ENCODE measurements at regions of chr12 and their contacts with region 1.

Region 1: DNA sequence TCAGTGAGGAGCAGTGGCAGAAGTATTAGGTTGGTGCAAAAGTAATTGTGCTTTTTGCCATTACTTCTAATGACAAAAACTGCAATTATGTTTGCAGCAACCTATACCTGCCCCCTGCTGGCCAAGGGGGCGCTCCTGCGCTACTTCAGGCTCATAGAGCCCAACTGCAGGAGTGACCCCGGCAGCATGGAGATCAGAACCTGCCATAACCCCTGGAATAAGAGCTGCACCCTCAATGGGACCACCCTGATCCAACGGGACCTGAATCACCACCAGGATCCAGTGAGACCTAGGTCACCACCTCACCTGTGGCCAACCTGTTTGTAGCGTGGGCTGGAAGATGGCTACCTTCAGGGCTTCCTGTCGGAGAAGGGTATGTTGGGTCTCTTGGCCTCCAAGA is 8.2 kb upstream of the C12orf42 start:
- DNase-seq: no peak
- ATAC-seq: peak; percentile 26
- H3K4me3 ChIP-seq: no peak overlapping the region
- H3K27ac ChIP-seq: no peak overlapping the region
- H3K4me1 ChIP-seq: peaks cover 22% of the 10 kb centered on the region
- H3K27me3 ChIP-seq: no peaks in the 10 kb centered on the region
- CTCF ChIP-seq: peak; percentile 59 to 80 (median 78)
- EP300 ChIP-seq: no peak
- POLR2A ChIP-seq: no peak
- RAD21 ChIP-seq: peak; percentile 85

Region 2: GRCh38 chr12:102948941-102949352 is 555.0 kb before region 1 on chr12:
- CTCF ChIA-PET with region 1: interaction called, 82 read pairs
- POLR2A ChIA-PET with region 1: interaction called, 3 read pairs
- RAD21 ChIA-PET with region 1: interaction called, 40 read pairs
- SMC1A ChIA-PET with region 1: interaction called, 69 read pairs
- in situ Hi-C with region 1: loop called (anchors 5 kb)
- intact Hi-C with region 1: loop called (anchors 2 kb)
- DNase-seq: no peak
- ATAC-seq: peak; percentile 32
- H3K4me3 ChIP-seq: no peak overlapping the region
- H3K27ac ChIP-seq: no peak overlapping the region
- H3K4me1 ChIP-seq: peaks cover 8% of the 10 kb centered on the region
- H3K27me3 ChIP-seq: no peaks in the 10 kb centered on the region; a peak in 1 of 4 replicates
- CTCF ChIP-seq: peak; percentile 88 to 94 (median 90)
- EP300 ChIP-seq: no peak
- POLR2A ChIP-seq: no peak
- RAD21 ChIP-seq: peak; percentile 88

Region 3: GRCh38 chr12:103114296-103115055 is 389.5 kb before region 1 on chr12:
- CTCF ChIA-PET with region 1: interaction called, 3 read pairs
- POLR2A ChIA-PET with region 1: no interaction called
- RAD21 ChIA-PET with region 1: no interaction called
- SMC1A ChIA-PET with region 1: interaction called, 5 read pairs
- in situ Hi-C with region 1: no loop called
- intact Hi-C with region 1: loop called (anchors 1 kb)
- DNase-seq: peak; percentile 95
- ATAC-seq: peak; percentile 98
- H3K4me3 ChIP-seq: no peak overlapping the region
- H3K27ac ChIP-seq: peak overlapping the region; percentile 80
- H3K4me1 ChIP-seq: peaks cover 19% of the 10 kb centered on the region
- H3K27me3 ChIP-seq: no peaks in the 10 kb centered on the region
- CTCF ChIP-seq: no peak
- EP300 ChIP-seq: peak; percentile 73 to 94; a peak in 3 of 4 replicates
- POLR2A ChIP-seq: no peak
- RAD21 ChIP-seq: peak; percentile 47

Region 4: GRCh38 chr12:103279444-103279843 is 224.5 kb before region 1 on chr12:
- CTCF ChIA-PET with region 1: no interaction called
- POLR2A ChIA-PET with region 1: interaction called, 3 read pairs
- RAD21 ChIA-PET with region 1: interaction called, 7 read pairs
- SMC1A ChIA-PET with region 1: interaction called, 4 read pairs
- in situ Hi-C with region 1: no loop called
- intact Hi-C with region 1: loop called (anchors 1 kb)
- DNase-seq: peak; percentile 93
- ATAC-seq: peak; percentile 94
- H3K4me3 ChIP-seq: no peak overlapping the region
- H3K27ac ChIP-seq: peak overlapping the region; percentile 53; the same call in 1 of the 2 replicates
- H3K4me1 ChIP-seq: peaks cover 21% of the 10 kb centered on the region
- H3K27me3 ChIP-seq: no peaks in the 10 kb centered on the region
- CTCF ChIP-seq: no peak
- EP300 ChIP-seq: peak; percentile 83 to 93
- POLR2A ChIP-seq: no peak
- RAD21 ChIP-seq: 0 out of 2 replicates have a peak, but pooled peaks have one; percentile 8

Region 5: GRCh38 chr12:103369929-103370328 is 134.0 kb before region 1 on chr12:
- CTCF ChIA-PET with region 1: no interaction called
- POLR2A ChIA-PET with region 1: no interaction called
- RAD21 ChIA-PET with region 1: no interaction called
- SMC1A ChIA-PET with region 1: interaction called, 5 read pairs
- in situ Hi-C with region 1: no loop called
- intact Hi-C with region 1: loop called (anchors 1 kb)
- DNase-seq: peak; percentile 78
- ATAC-seq: peak; percentile 89
- H3K4me3 ChIP-seq: no peak overlapping the region
- H3K27ac ChIP-seq: no peak overlapping the region
- H3K4me1 ChIP-seq: peaks cover 10% of the 10 kb centered on the region
- H3K27me3 ChIP-seq: no peaks in the 10 kb centered on the region
- CTCF ChIP-seq: no peak
- EP300 ChIP-seq: peak; percentile 76 to 86
- POLR2A ChIP-seq: no peak
- RAD21 ChIP-seq: no peak

Region 6: GRCh38 chr12:103441437-103442181 is 62.4 kb before region 1 on chr12:
- CTCF ChIA-PET with region 1: interaction called, 6 read pairs
- POLR2A ChIA-PET with region 1: no interaction called
- RAD21 ChIA-PET with region 1: interaction called, 3 read pairs
- SMC1A ChIA-PET with region 1: interaction called, 4 read pairs
- in situ Hi-C with region 1: no loop called
- intact Hi-C with region 1: loop called (anchors 1 kb)
- DNase-seq: peak; percentile 97
- ATAC-seq: peak; percentile 98
- H3K4me3 ChIP-seq: peak overlapping the region; percentile 58
- H3K27ac ChIP-seq: peak overlapping the region; percentile 71
- H3K4me1 ChIP-seq: peaks cover 22% of the 10 kb centered on the region
- H3K27me3 ChIP-seq: no peaks in the 10 kb centered on the region
- CTCF ChIP-seq: peak in 2 of 3 experiments; percentile 11 to 28; a peak in 1 of 6 replicates
- EP300 ChIP-seq: peak; percentile 72 to 96; a peak in 3 of 4 replicates
- POLR2A ChIP-seq: peak; percentile 64
- RAD21 ChIP-seq: peak; percentile 55

Region 7: DNA sequence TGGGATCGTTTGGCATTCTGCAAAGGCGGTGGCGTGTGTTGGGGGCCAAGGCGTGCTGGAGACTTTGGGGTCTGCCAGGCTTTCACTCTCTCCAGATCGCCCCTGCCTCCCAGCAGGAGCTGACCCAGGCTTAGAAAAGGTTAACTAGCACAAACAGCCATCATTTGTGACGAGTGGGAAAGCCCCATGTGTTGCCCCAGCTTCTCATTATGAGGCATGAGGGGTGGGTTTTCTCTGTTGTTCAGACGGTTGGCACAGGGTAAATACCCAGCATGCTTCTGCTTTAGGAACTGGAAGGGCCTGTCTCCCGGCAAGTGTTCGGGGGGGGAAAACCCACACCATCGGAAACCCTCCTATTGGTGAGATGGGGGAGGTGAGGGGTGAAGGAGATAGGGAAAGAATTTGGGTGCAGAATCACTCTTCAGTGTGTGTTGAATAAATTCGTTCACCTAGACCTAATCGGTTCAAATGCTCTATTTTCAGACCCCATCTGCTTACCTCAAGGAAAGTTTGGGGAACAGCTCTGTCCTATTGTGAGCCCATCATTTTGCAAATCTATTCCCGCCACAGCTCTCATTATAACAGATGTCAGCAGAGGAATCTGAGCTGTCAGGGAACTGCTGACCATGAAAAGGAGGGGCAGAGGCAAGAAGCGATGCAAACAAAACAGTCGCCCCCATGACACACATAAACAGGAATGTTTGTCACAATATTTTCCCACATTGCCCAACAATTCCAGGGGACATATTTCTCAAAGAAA is 26.5 kb after region 1 on chr12:
- CTCF ChIA-PET with region 1: interaction called, 10 read pairs
- POLR2A ChIA-PET with region 1: interaction called, 7 read pairs
- RAD21 ChIA-PET with region 1: interaction called, 24 read pairs
- SMC1A ChIA-PET with region 1: interaction called, 16 read pairs
- in situ Hi-C with region 1: no loop called
- intact Hi-C with region 1: loop called (anchors 1 kb)
- DNase-seq: no peak
- ATAC-seq: peak; percentile 94
- H3K4me3 ChIP-seq: no peak overlapping the region
- H3K27ac ChIP-seq: no peak overlapping the region
- H3K4me1 ChIP-seq: peaks cover 8% of the 10 kb centered on the region
- H3K27me3 ChIP-seq: no peaks in the 10 kb centered on the region
- CTCF ChIP-seq: no peak
- EP300 ChIP-seq: no peak; a peak in 1 of 4 replicates
- POLR2A ChIP-seq: no peak
- RAD21 ChIP-seq: no peak

Measured in GM12878 (cell line).